SK-N-SH (cell line): ENCODE measurements at regions of chr7 and their contacts with region 1.

Region 1: DNA sequence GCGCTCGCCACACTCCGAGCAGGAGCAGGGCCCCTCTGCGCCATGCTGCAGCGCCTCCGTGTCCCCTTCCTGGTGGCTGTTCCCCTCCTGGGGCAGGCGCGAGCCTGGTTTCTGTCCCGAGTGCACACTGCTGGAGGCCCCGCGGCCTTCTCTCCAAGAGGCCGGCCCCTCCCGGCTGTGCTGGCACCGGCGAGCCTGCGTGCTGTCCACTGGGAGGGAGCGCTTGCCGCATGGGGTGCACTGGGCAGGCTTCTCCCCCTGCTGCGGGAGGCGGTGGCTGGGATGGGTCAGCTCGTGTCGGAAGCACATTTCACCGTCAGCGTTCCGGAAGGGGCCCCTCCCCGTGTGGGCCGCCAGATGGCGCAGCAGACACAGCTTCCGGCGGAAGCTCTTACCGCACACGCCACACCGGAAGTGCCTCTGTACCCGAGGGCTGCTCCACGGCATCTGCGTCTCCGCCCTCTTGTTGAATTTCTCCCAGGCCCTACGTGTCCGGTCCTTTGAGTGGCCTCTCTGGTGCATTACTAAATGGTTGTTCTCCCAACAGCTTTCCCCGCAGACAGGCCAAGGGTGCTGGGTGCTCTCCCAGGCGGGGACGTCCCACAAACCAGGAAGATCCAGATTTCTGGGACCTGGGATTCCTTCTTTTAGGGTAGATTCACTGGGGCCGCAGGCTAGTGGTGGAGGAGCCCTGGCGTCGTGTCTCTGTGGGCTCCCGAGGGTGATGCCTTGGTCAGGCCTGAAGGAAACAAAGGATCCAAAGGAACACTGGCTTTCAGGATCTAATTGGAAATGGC is 18.7 kb downstream of the ZNF786 start:
- DNase-seq: peak; percentile 61
- H3K4me3 ChIP-seq: no peak overlapping the region
- H3K27ac ChIP-seq: no peak overlapping the region
- H3K4me1 ChIP-seq: no peaks in the 10 kb centered on the region
- H3K27me3 ChIP-seq: no peaks in the 10 kb centered on the region
- CTCF ChIP-seq: no peak
- EP300 ChIP-seq: no peak
- RAD21 ChIP-seq: 0 out of 2 replicates have a peak, but pooled peaks have one; percentile 39

Region 2: GRCh38 chr7:148987010-148987750 is 84.7 kb before region 1 on chr7:
- CTCF ChIA-PET with region 1: interaction called, 16 read pairs
- POLR2A ChIA-PET with region 1: no interaction called
- DNase-seq: peak; percentile 94
- H3K4me3 ChIP-seq: peak overlapping the region; percentile 79 to 89
- H3K27ac ChIP-seq: peak overlapping the region; percentile 75 to 83
- H3K4me1 ChIP-seq: peaks cover 6 to 12% of the 10 kb centered on the region in 2 experiments; a peak in 2 of 4 replicates
- H3K27me3 ChIP-seq: no peaks in the 10 kb centered on the region
- CTCF ChIP-seq: 0 out of 2 replicates have a peak, but pooled peaks have one; percentile 9
- EP300 ChIP-seq: no peak
- RAD21 ChIP-seq: no peak

Region 3: DNA sequence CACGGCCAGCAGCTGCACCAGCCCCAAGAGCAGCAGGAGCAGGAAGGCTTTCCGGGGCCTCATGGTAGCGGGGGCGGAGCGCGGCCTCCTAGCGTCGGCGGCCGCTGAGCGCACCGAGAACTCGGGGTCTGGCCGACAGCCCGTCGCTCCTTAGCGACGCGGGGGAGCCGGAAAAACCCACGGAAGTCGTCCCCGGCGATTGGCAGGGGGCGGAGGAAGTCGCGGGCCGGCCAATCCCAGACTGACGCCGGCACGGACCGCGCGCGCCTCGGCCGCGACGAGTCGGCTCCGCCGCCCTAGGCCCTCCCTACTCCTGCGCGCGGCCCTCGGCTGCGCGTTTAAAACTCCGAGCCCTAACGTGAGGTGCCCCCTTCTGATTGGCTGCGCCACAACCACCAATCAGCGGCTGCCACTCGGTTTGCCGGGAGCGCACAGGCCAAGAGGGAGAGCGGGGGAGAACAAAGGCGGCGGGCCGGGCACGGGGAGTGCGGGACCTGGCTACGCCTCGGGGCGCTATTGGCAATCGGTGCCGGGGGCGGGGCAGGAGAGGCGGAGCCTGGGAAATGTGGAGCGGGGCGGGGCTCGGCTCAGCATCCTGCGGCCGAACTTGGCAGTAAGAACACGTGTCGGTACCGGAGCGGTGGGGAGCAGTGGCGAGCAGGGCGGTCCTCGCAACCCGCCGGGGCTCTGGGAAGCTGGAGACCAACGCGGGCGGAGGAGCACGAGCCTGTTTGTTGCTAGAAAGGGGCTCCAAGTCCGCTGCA is 43.3 kb before region 1 on chr7 and contains the start of gene PDIA4:
- CTCF ChIA-PET with region 1: interaction called, 14 read pairs
- POLR2A ChIA-PET with region 1: no interaction called
- DNase-seq: peak; percentile 100
- H3K4me3 ChIP-seq: peak within 1 kb of the TSS; percentile 85 to 97
- H3K27ac ChIP-seq: peak within 1 kb of the TSS; percentile 82 to 92
- H3K4me1 ChIP-seq: peaks cover 5 to 17% of the 10 kb centered on the region in 2 experiments; a peak in 3 of 4 replicates
- H3K27me3 ChIP-seq: no peaks in the 10 kb centered on the region
- CTCF ChIP-seq: peak; percentile 36
- EP300 ChIP-seq: peak in 1 of 2 experiments; percentile 51; a peak in 2 of 4 replicates
- RAD21 ChIP-seq: peak; percentile 11; the same call in 1 of the 2 replicates
- polyA plus RNA-seq, gene PDIA4: 393 and 400 TPM in 2 replicates

Region 4: GRCh38 chr7:149081914-149082313 is 10.1 kb after region 1 on chr7:
- CTCF ChIA-PET with region 1: interaction called, 38 read pairs
- POLR2A ChIA-PET with region 1: no interaction called
- DNase-seq: no peak
- H3K4me3 ChIP-seq: no peak overlapping the region
- H3K27ac ChIP-seq: no peak overlapping the region
- H3K4me1 ChIP-seq: no peaks in the 10 kb centered on the region
- H3K27me3 ChIP-seq: no peaks in the 10 kb centered on the region
- CTCF ChIP-seq: no peak
- EP300 ChIP-seq: no peak
- RAD21 ChIP-seq: no peak

Region 5: DNA sequence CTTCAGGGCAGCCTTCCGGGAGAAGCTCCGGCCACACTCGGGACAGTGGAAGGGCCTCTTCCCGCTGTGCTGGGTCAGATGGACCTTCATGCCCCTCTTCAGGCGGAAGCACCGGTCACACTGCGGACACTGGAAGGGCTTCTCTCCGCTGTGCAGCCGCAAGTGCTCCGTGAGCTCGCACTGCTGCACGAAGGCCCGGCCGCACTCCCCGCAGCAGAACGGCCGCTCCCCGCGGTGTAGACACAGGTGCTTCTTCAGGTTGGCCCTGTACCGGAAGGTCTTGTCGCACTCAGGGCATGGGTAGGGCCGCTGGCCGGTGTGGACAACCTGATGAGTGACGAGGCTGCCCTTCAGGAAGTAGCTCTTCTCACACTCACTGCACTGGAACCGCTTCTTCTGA is 32.9 kb after region 1 on chr7:
- CTCF ChIA-PET with region 1: no interaction called
- POLR2A ChIA-PET with region 1: no interaction called
- DNase-seq: no peak
- H3K4me3 ChIP-seq: no peak overlapping the region
- H3K27ac ChIP-seq: no peak overlapping the region
- H3K4me1 ChIP-seq: no peaks in the 10 kb centered on the region
- H3K27me3 ChIP-seq: no peaks in the 10 kb centered on the region
- CTCF ChIP-seq: no peak
- EP300 ChIP-seq: no peak
- RAD21 ChIP-seq: no peak